Activated T-helper 1 cell treated with anti-CD3 and anti-CD28 coated beads, Interleukin-12 subunit alpha, Interleukin-12 subunit beta, Interleukin-2, Interleukin-4 antibody, amounts not matched to agents 30 ng/mL and 10 ng/mL and 1 ng/mL, durations not matched to agents 14 hours and 24 hours and 36 hours (primary cell): ENCODE measurements at regions of chr14 and their contacts with region 1.

Region 1: GRCh38 chr14:92135267-92135666 is 13.5 kb downstream of the CPSF2 start:
- DNase-seq: no peak
- H3K4me3 Mint-ChIP-seq: no peak overlapping the region
- H3K27ac Mint-ChIP-seq: no peak overlapping the region
- H3K4me1 Mint-ChIP-seq: peaks cover 6% of the 10 kb centered on the region
- H3K27me3 Mint-ChIP-seq: no peaks in the 10 kb centered on the region

Region 2: GRCh38 chr14:92199763-92200162 is 64.5 kb after region 1 on chr14:
- intact Hi-C with region 1: no loop called
- DNase-seq: no peak
- H3K4me3 Mint-ChIP-seq: no peak overlapping the region
- H3K27ac Mint-ChIP-seq: no peak overlapping the region
- H3K4me1 Mint-ChIP-seq: no peaks in the 10 kb centered on the region
- H3K27me3 Mint-ChIP-seq: peaks cover 17% of the 10 kb centered on the region

Region 3: DNA sequence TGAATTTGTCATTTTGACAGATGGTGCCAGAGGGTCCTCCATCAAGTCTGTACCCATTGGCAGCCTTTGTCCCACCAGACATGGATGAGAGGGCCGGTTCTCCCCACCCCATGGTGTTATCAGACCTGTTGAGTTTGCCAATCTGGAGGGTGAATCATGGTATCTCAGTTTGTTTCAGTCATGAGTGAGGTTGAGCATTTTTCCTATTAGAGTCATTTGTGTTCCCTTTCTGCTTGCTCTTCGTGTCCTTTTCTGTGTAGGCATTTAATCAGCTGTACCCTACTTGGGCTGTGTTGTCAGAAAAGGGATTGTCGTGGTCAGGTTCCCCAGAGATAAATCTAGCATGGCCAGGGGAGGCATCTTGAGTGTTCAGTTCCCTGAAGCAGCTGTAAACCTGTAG is 218.2 kb after region 1 on chr14:
- intact Hi-C with region 1: loop called (anchors 1 kb)
- DNase-seq: no peak
- H3K4me3 Mint-ChIP-seq: no peak overlapping the region
- H3K27ac Mint-ChIP-seq: no peak overlapping the region
- H3K4me1 Mint-ChIP-seq: no peaks in the 10 kb centered on the region
- H3K27me3 Mint-ChIP-seq: peaks cover 13% of the 10 kb centered on the region

Region 4: DNA sequence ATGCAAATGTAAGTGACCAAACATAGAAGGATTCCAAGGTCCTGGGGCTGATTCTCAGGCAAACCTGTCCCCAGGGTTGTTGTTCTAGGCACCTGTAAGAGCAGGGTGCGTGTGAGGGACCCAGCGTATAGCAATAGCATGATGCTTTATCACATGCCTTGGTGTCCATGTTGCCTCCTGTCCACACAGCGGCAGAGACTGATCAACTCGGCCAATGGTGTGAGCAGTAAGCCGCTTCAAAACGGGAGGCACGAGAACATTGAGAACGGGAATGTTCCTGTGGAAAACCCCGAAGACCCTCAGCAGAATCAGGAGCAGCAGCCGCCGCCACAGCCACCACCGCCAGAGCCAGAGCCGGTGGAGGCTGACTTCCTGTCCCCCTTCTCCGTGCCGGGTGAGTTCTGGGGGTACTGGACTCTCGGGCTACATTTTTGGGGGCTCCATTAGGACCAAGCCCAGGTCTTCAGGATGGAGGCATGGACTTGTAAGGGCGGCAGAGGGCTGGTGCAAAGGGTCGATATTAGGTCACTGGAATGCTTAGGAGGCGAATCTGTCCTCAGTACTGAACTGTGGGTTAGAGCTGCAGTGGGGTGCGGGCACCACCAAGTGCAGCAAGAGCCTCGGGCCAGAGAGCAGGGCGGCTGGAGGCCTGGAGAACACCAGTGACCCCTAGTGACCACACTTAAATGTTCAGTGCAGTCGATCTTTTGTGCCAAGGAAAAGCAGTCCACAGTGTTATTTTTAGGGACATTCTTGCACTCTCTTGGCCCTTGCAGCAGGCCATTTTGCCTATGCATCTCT is 321.1 kb after region 1 on chr14:
- intact Hi-C with region 1: loop called (anchors 1 kb)
- DNase-seq: no peak
- H3K4me3 Mint-ChIP-seq: no peak overlapping the region
- H3K27ac Mint-ChIP-seq: no peak overlapping the region
- H3K4me1 Mint-ChIP-seq: peaks cover 19% of the 10 kb centered on the region
- H3K27me3 Mint-ChIP-seq: no peaks in the 10 kb centered on the region